Activated T-helper 2 cell treated with anti-CD3 and anti-CD28 coated beads, Interferon-gamma antibody, Interleukin-2, Interleukin-4, amounts not matched to agents 10 μg/mL and 5 μg/mL and 100 μg/mL, durations not matched to agents 14 hours and 24 hours and 36 hours (primary cell): ENCODE measurements at regions of chr6 and their contacts with region 1.

Region 1: GRCh38 chr6:5260661-5261544 is at the starts of genes FARS2 and LYRM4:
- DNase-seq: peak; percentile 90
- H3K4me3 Mint-ChIP-seq: peak within 1 kb of the TSS; percentile 98
- H3K27ac Mint-ChIP-seq: peak within 1 kb of the TSS; percentile 99
- H3K4me1 Mint-ChIP-seq: peaks cover 40% of the 10 kb centered on the region
- H3K27me3 Mint-ChIP-seq: no peaks in the 10 kb centered on the region
- total RNA-seq, gene FARS2: 18.4 and 19.7 TPM in 2 replicates
- total RNA-seq, gene LYRM4: 45.2 and 48.6 TPM in 2 replicates

Region 2: DNA sequence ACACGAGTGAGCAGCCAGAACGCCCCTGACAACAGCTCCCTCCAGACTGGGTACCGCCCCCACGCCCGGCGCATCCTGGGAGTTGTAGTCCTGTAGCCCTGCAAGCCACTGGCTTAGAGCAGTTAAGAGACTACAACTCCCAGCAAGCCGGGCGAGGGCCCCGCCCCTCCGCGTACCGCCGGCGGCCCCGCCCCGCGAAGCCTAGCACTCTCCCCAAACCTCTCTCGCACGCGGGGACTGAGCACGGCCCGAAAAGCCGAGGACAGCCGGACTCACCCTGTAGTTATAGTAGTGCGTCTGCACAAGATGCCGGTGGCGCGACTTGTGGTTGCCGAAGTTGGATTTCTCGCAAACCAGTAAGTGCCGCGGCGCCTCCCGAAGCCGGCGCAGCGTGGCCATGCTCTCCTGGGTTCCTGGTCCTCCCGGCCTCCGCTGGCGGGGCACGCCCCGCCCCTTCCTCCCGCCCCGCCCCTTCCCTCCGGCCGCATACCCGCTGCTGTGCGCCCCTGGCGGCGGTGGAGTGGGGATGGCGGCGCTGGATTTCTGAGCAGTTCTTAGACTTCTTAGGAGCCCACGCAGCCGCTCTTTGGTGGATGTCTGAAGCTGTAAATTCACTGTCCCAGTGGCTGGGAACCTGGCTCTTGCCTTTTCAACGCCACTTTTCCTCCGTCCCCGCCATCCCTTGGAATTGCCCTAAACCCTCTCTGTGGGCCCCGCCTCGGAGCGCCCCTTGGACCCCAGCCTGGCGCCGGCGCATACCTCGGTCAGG is 257.1 kb before region 1 on chr6 and contains the start of gene RPP40:
- intact Hi-C with region 1: loop called (anchors 1 kb)
- DNase-seq: peak; percentile 97
- H3K4me3 Mint-ChIP-seq: peak within 1 kb of the TSS; percentile 91
- H3K27ac Mint-ChIP-seq: peak within 1 kb of the TSS; percentile 96
- H3K4me1 Mint-ChIP-seq: peaks cover 7% of the 10 kb centered on the region
- H3K27me3 Mint-ChIP-seq: no peaks in the 10 kb centered on the region
- total RNA-seq, gene RPP40: 11.7 and 12.2 TPM in 2 replicates

Region 3: GRCh38 chr6:5143634-5144311 is 117.1 kb before region 1 on chr6:
- intact Hi-C with region 1: loop called (anchors 5 kb)
- DNase-seq: peak; percentile 62
- H3K4me3 Mint-ChIP-seq: no peak overlapping the region
- H3K27ac Mint-ChIP-seq: no peak overlapping the region
- H3K4me1 Mint-ChIP-seq: peaks cover 3% of the 10 kb centered on the region
- H3K27me3 Mint-ChIP-seq: no peaks in the 10 kb centered on the region

Region 4: GRCh38 chr6:5234874-5235273 is 26.0 kb before region 1 on chr6:
- intact Hi-C with region 1: no loop called
- DNase-seq: no peak
- H3K4me3 Mint-ChIP-seq: no peak overlapping the region
- H3K27ac Mint-ChIP-seq: no peak overlapping the region
- H3K4me1 Mint-ChIP-seq: peaks cover 13% of the 10 kb centered on the region
- H3K27me3 Mint-ChIP-seq: no peaks in the 10 kb centered on the region

Region 5: DNA sequence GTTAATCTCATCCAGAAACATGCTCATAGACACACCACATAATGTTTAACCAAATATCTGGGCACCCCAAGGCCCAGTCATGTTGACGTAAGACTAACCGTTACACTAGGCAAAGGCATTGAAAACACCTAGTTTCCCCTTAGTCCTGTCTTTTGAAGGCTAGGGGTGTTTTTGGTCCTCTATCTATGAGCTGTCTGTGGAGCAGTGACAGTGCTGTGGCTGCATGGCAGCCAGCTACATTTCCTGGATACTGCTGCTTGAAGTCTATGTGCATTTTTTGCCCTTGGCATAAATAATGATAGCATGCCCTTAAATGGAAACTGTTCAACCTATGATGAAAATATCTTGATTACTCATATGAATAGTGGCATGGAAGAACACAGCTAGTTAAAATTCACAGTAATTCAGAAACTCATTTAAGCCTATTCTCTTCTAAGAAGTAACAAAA is 19.0 kb after region 1 on chr6:
- intact Hi-C with region 1: loop called (anchors 1 kb)
- DNase-seq: peak; percentile 22
- H3K4me3 Mint-ChIP-seq: no peak overlapping the region
- H3K27ac Mint-ChIP-seq: peak overlapping the region; percentile 85
- H3K4me1 Mint-ChIP-seq: peaks cover 53% of the 10 kb centered on the region
- H3K27me3 Mint-ChIP-seq: no peaks in the 10 kb centered on the region

Region 6: GRCh38 chr6:5302995-5303622 is 42.2 kb after region 1 on chr6:
- intact Hi-C with region 1: loop called (anchors 1 kb)
- DNase-seq: peak; percentile 44
- H3K4me3 Mint-ChIP-seq: peak overlapping the region; percentile 13
- H3K27ac Mint-ChIP-seq: peak overlapping the region; percentile 81
- H3K4me1 Mint-ChIP-seq: peaks cover 38% of the 10 kb centered on the region
- H3K27me3 Mint-ChIP-seq: no peaks in the 10 kb centered on the region

Region 7: GRCh38 chr6:5398530-5398929 is 137.6 kb after region 1 on chr6:
- intact Hi-C with region 1: loop called (anchors 1 kb)
- DNase-seq: no peak
- H3K4me3 Mint-ChIP-seq: no peak overlapping the region
- H3K27ac Mint-ChIP-seq: no peak overlapping the region
- H3K4me1 Mint-ChIP-seq: peaks cover 9% of the 10 kb centered on the region
- H3K27me3 Mint-ChIP-seq: no peaks in the 10 kb centered on the region

Region 8: DNA sequence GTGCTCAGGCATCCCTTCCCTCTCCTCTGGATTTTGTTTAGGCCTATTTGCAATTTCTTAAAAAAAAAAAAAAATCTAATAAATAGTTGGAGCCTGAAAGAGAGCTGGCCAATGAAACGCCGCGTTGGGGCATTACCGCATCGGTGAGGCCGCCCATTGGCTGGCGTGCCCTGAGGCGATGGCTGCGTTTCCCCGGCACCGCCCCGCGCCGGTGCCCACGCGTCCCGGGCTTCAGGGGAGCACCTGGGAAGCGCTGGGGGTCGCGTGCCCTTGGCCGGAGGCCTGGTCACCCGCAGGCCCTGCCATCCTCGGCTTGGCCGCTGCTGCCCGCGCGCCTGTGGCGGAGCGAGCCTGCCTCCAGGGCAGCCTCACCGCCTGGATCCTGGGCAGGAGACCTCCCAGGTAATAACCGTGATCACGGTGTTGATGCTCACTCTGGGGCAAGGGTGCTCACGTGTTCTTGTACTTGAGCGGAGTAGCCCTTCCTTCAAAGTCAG is 590.4 kb after region 1 on chr6:
- intact Hi-C with region 1: loop called (anchors 2 kb)
- DNase-seq: peak; percentile 57
- H3K4me3 Mint-ChIP-seq: peak overlapping the region; percentile 71
- H3K27ac Mint-ChIP-seq: no peak overlapping the region
- H3K4me1 Mint-ChIP-seq: peaks cover 10% of the 10 kb centered on the region
- H3K27me3 Mint-ChIP-seq: peaks cover 13% of the 10 kb centered on the region